Activated CD8-positive, alpha-beta T cell treated with anti-CD3 and anti-CD28 coated beads, Interleukin-2, amount 10 ng/mL, durations not matched to agents 7 days and 5 days (primary cell): ENCODE measurements at regions of chr6 and their contacts with region 1.

Region 1: DNA sequence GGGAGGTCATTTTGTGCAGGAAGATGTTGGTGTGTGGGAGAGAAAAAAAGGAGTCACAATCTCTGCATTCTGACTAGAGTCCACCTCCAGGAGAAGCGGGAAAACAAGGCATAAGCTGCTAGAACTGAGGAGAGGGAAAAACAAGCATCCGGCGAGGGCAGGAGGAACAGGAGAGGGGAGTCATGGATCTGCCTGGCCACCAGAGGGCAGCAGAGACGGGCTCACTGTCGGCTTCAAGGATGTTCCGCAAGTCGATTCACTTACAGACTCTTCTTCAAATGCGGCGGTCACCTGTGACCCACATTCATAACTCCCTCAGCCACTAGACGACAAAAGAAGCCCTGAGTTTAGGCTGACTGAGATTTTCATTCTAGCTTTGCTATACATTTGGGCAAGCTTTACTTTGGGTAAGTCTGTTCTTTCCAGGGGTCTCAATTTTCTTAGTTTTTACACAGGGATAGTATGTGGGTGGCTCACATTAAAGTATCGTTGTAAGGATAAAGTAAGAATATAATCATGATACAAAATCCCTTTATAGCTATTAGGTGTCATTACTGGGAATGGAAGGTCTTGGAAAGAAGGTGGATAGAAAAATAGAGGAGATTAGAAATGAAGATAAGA is 6.6 kb upstream of the BTNL2 start:
- DNase-seq: peak; percentile 87
- ATAC-seq: peak; percentile 82
- H3K4me3 Mint-ChIP-seq: no peak overlapping the region
- H3K27ac Mint-ChIP-seq: no peak overlapping the region
- H3K4me1 Mint-ChIP-seq: peaks cover 8% of the 10 kb centered on the region
- H3K27me3 Mint-ChIP-seq: peaks cover 48% of the 10 kb centered on the region

Region 2: GRCh38 chr6:32402812-32403211 is 10.7 kb before region 1 on chr6:
- CTCF ChIA-PET with region 1: interaction called, 39 read pairs
- POLR2A ChIA-PET with region 1: no interaction called
- DNase-seq: no peak
- ATAC-seq: no peak
- H3K4me3 Mint-ChIP-seq: no peak overlapping the region
- H3K27ac Mint-ChIP-seq: no peak overlapping the region
- H3K4me1 Mint-ChIP-seq: no peaks in the 10 kb centered on the region
- H3K27me3 Mint-ChIP-seq: peaks cover 43% of the 10 kb centered on the region

Region 3: GRCh38 chr6:32568561-32568960 is 155.0 kb after region 1 on chr6:
- CTCF ChIA-PET with region 1: no interaction called
- POLR2A ChIA-PET with region 1: no interaction called
- DNase-seq: peak; percentile 22
- ATAC-seq: no peak
- H3K4me3 Mint-ChIP-seq: no peak overlapping the region
- H3K27ac Mint-ChIP-seq: peak overlapping the region; percentile 50
- H3K4me1 Mint-ChIP-seq: peaks cover 15% of the 10 kb centered on the region
- H3K27me3 Mint-ChIP-seq: peaks cover 31% of the 10 kb centered on the region

Region 4: GRCh38 chr6:32692019-32692418 is 278.5 kb after region 1 on chr6:
- CTCF ChIA-PET with region 1: interaction called, 41 read pairs
- POLR2A ChIA-PET with region 1: no interaction called
- DNase-seq: peak; percentile 69
- ATAC-seq: peak; percentile 81
- H3K4me3 Mint-ChIP-seq: no peak overlapping the region
- H3K27ac Mint-ChIP-seq: no peak overlapping the region
- H3K4me1 Mint-ChIP-seq: peaks cover 15% of the 10 kb centered on the region
- H3K27me3 Mint-ChIP-seq: peaks cover 47% of the 10 kb centered on the region

Region 5: DNA sequence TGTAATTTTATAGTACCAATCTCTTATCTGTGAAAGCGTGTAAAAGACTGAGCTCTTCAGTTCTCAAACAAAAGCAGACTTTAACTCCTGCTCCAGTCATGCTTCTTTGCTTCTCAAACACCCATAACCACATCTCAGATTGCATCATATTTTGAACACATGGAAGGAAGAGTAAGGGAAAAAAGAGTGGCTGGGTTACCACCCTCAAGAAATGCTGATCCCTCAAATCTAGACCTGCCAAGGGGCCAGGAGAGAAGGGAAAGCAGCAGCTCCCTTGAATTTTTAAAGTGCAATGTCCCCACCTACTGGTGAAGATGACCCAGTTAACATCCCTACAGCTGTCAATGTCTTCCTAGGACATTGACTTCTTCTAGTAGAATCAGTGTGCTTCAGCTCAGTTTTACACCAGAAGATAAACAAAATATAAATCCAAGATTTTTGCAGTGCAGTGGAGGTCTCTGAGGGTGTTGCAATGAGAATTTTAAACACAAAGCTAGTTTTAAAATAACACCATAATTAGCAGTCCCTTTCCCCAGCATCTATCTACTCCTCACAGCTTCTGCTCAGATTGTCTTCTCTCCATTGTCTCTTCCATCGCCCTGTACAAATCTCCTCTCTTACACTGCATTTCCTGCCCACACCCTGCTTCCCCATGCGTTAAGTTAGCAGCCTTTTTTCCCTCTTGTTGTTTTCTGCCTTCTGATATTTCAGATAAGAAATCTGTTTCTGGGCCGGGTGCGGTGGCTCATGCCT is 372.4 kb after region 1 on chr6:
- CTCF ChIA-PET with region 1: interaction called, 105 read pairs
- POLR2A ChIA-PET with region 1: no interaction called
- DNase-seq: peak; percentile 54
- ATAC-seq: peak; percentile 93
- H3K4me3 Mint-ChIP-seq: no peak overlapping the region
- H3K27ac Mint-ChIP-seq: no peak overlapping the region
- H3K4me1 Mint-ChIP-seq: no peaks in the 10 kb centered on the region
- H3K27me3 Mint-ChIP-seq: peaks cover 52% of the 10 kb centered on the region

Region 6: DNA sequence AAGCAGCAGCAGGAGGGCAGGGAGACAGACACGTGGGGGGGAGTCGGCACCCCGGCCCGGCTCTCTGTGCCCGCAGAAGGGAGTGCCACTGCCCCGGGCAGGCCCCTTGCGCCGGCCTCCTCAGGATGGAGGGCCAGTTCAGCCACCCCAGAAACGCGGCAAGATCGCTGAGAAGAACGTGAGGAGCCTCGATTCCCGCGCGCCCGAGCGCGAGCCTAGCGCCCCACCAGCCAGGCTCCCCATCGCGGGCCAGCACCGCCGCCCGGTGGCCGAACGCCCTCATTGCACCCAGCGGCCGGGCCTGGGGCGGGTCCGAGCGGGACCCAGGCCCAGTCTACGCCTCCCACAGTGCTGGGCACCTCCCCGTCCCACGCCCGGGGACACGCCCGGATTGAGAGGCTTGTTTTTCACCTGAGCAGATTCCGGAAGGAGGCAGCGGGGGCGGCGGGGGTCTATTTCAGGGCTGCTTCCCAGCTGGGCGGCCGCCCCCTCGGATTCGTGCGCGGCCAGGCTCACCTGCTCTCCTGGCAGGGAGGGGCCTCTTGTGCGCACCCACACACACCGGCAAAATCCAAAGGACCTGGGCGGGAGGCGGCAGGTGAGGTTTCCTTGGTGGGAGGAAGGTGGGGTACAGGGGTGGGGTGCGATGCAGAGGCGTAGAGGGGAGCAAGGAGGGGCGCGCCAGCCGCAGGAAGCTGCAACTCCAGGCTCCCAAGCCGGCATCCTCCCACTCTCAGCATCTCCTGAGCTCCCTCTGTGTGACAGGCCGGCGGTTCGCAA is 1741.3 kb after region 1 on chr6:
- CTCF ChIA-PET with region 1: no interaction called
- POLR2A ChIA-PET with region 1: no interaction called
- DNase-seq: peak; percentile 69
- ATAC-seq: peak; percentile 84
- H3K4me3 Mint-ChIP-seq: no peak overlapping the region
- H3K27ac Mint-ChIP-seq: no peak overlapping the region
- H3K4me1 Mint-ChIP-seq: peaks cover 5% of the 10 kb centered on the region
- H3K27me3 Mint-ChIP-seq: peaks cover 49% of the 10 kb centered on the region